GM12878 (cell line): ENCODE measurements at regions of chr6 and their contacts with region 1.

Region 1: GRCh38 chr6:44869321-44869897 is 458.7 kb upstream of the RUNX2 start:
- DNase-seq: peak; percentile 86
- ATAC-seq: peak; percentile 86
- H3K4me3 ChIP-seq: peak overlapping the region; percentile 33
- H3K27ac ChIP-seq: peak overlapping the region; percentile 2
- H3K4me1 ChIP-seq: peaks cover 25% of the 10 kb centered on the region
- H3K27me3 ChIP-seq: no peaks in the 10 kb centered on the region
- CTCF ChIP-seq: no peak
- EP300 ChIP-seq: peak; percentile 46 to 85; a peak in 3 of 4 replicates
- POLR2A ChIP-seq: no peak
- RAD21 ChIP-seq: no peak

Region 2: GRCh38 chr6:44655412-44656342 is 213.7 kb before region 1 on chr6:
- CTCF ChIA-PET with region 1: interaction called, 5 read pairs
- POLR2A ChIA-PET with region 1: no interaction called
- RAD21 ChIA-PET with region 1: interaction called, 8 read pairs
- SMC1A ChIA-PET with region 1: interaction called, 16 read pairs
- in situ Hi-C with region 1: no loop called
- intact Hi-C with region 1: loop called (anchors 5 kb)
- DNase-seq: no peak
- ATAC-seq: peak; percentile 90
- H3K4me3 ChIP-seq: no peak overlapping the region
- H3K27ac ChIP-seq: no peak overlapping the region
- H3K4me1 ChIP-seq: no peaks in the 10 kb centered on the region; the same call in 1 of the 2 replicates
- H3K27me3 ChIP-seq: peaks cover 0 to 2% of the 10 kb centered on the region in 2 experiments; a peak in 1 of 4 replicates
- CTCF ChIP-seq: peak; percentile 90 to 92 (median 90)
- EP300 ChIP-seq: no peak
- POLR2A ChIP-seq: no peak
- RAD21 ChIP-seq: peak; percentile 92

Region 3: DNA sequence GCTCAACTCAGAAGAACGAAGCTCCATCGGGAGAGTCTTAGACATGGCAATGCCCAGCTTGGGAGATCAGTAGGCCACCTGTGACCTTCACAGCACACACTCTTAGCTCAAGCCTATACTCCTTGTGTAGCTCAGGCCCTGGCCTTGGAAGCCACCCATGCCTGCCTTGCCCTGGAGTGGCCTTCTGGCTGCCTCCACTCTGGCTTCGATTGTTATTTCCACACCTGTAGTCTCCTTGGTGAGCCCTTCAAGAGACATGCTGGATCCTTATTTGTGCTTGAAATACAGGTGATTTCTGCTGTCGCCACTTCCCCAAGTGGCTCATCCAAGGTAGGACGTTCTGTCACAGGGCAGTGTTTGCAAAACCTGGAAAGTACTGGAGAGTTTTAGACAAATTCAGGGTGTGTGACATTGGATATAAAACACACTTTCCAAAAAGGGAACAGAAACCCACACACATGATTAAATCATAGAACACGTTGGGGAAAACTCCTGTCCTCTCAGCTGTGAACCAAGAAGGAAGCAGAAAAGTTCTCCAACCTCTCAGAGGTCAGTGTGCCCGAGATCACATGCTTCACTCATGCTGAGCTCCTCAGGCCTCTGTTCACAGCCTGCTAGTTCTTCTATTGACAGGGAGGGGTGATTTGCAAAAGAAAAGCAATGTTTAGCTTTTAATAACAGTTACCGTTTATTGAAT is 90.1 kb before region 1 on chr6:
- CTCF ChIA-PET with region 1: interaction called, 4 read pairs
- POLR2A ChIA-PET with region 1: no interaction called
- RAD21 ChIA-PET with region 1: no interaction called
- SMC1A ChIA-PET with region 1: interaction called, 15 read pairs
- in situ Hi-C with region 1: no loop called
- intact Hi-C with region 1: no loop called
- DNase-seq: peak; percentile 62
- ATAC-seq: peak; percentile 96
- H3K4me3 ChIP-seq: no peak overlapping the region
- H3K27ac ChIP-seq: no peak overlapping the region; the same call in 1 of the 2 replicates
- H3K4me1 ChIP-seq: peaks cover 15% of the 10 kb centered on the region
- H3K27me3 ChIP-seq: no peaks in the 10 kb centered on the region
- CTCF ChIP-seq: no peak
- EP300 ChIP-seq: peak in 1 of 2 experiments; percentile 23; a peak in 1 of 4 replicates
- POLR2A ChIP-seq: no peak
- RAD21 ChIP-seq: no peak

Region 4: DNA sequence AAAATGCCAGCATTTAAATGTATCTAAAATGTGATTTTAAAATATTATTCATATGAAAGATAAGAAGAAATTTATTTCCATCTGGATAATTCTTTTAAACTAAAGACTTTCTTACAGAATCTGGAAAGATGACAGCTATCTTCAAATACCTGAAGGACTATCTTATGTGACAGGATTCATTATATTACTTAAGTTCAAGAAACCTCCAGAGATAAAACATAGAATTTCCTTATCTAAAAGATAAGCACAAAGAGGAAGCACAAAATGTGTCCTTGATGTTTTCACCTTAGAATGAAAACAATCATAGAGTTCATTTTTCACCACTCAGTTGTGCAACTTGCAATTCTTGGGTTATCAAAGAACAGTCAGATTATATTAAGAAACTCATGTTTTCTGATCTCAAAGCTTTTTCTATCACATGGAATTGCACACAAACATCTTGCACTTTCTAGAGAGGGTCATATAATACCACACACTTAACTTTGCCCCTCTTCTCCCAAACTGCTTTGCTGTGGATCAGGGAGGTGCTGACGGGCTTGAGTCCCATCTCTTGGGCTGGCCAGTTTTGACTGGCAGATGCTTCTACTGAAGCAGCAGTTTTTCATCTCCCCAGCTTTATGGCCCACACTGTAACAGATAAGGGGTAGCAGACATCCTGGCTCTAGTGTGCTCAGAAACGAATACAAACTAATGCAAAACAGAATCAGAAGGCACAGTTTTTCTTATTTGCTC is 14.5 kb before region 1 on chr6:
- CTCF ChIA-PET with region 1: interaction called, 3 read pairs
- POLR2A ChIA-PET with region 1: interaction called, 4 read pairs
- RAD21 ChIA-PET with region 1: interaction called, 6 read pairs
- SMC1A ChIA-PET with region 1: interaction called, 10 read pairs
- in situ Hi-C with region 1: no loop called
- intact Hi-C with region 1: no loop called
- DNase-seq: no peak
- ATAC-seq: no peak
- H3K4me3 ChIP-seq: no peak overlapping the region
- H3K27ac ChIP-seq: no peak overlapping the region
- H3K4me1 ChIP-seq: no peaks in the 10 kb centered on the region
- H3K27me3 ChIP-seq: no peaks in the 10 kb centered on the region
- CTCF ChIP-seq: no peak
- EP300 ChIP-seq: no peak
- POLR2A ChIP-seq: no peak
- RAD21 ChIP-seq: no peak

Region 5: DNA sequence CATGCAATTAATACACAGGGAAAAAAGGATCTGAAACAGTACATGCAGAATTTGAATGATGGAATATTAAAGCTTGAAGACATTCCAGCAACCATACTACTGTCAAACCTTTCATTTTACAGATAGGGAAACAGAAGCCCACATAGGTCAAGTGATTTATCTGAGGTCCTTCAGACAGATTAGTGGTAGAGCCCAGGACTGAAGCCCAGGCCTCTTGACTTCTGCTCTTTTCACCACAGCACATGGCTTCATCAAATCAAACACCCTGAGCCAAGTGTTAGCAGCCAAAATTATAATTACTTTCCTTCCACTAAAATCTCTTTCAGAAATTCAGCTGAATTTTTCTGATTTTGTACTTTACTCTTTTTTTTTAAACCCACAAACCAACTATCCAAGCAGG is 23.2 kb after region 1 on chr6:
- CTCF ChIA-PET with region 1: no interaction called
- POLR2A ChIA-PET with region 1: no interaction called
- RAD21 ChIA-PET with region 1: no interaction called
- SMC1A ChIA-PET with region 1: no interaction called
- in situ Hi-C with region 1: no loop called
- intact Hi-C with region 1: no loop called
- DNase-seq: no peak
- ATAC-seq: no peak
- H3K4me3 ChIP-seq: no peak overlapping the region
- H3K27ac ChIP-seq: no peak overlapping the region
- H3K4me1 ChIP-seq: no peaks in the 10 kb centered on the region
- H3K27me3 ChIP-seq: no peaks in the 10 kb centered on the region
- CTCF ChIP-seq: no peak
- EP300 ChIP-seq: no peak
- POLR2A ChIP-seq: no peak
- RAD21 ChIP-seq: no peak

Region 6: DNA sequence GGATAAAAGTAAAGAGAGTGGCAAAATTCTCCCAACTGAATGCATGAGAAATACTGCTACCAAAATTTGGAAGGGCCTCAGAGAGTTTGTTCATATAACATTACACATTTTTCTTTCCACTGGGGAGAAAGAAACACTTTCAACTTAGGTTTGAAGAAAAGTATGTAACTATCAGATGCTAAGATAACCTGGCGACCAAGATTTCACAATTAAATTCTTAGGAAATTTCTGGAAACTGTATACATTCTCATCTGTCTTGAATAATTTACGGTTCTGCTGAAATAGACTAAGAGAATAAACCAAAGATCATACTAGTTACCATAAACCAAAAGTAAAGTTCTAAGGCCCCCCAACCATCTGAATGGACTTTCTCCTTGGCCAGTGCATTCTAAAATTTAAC is 45.7 kb after region 1 on chr6:
- CTCF ChIA-PET with region 1: no interaction called
- POLR2A ChIA-PET with region 1: no interaction called
- RAD21 ChIA-PET with region 1: no interaction called
- SMC1A ChIA-PET with region 1: no interaction called
- in situ Hi-C with region 1: no loop called
- intact Hi-C with region 1: no loop called
- DNase-seq: no peak
- ATAC-seq: no peak
- H3K4me3 ChIP-seq: no peak overlapping the region
- H3K27ac ChIP-seq: no peak overlapping the region
- H3K4me1 ChIP-seq: no peaks in the 10 kb centered on the region
- H3K27me3 ChIP-seq: no peaks in the 10 kb centered on the region
- CTCF ChIP-seq: no peak
- EP300 ChIP-seq: no peak
- POLR2A ChIP-seq: no peak
- RAD21 ChIP-seq: no peak

Region 7: DNA sequence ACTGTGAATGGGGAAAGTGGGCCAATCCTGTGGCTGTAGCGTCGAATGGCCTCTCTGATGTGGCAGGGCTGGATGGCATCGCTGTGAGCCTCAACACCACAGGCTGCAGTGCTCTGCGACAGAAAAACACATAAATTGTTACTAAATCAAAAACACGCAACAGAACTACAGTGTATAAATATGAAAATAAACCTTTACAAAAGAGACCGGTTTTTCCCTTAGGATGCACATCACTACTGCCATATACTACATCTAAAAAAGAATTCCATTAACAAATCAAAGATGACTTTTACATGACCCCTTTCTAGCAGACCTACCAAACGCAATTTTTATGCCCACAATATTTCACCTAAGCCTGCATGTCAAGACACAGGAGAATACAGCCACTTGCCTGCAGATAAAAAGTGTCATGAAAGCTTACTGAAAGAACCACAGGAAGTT is 63.3 kb after region 1 on chr6:
- CTCF ChIA-PET with region 1: no interaction called
- POLR2A ChIA-PET with region 1: interaction called, 4 read pairs
- RAD21 ChIA-PET with region 1: interaction called, 9 read pairs
- SMC1A ChIA-PET with region 1: interaction called, 24 read pairs
- in situ Hi-C with region 1: no loop called
- intact Hi-C with region 1: loop called (anchors 5 kb)
- DNase-seq: no peak
- ATAC-seq: peak; percentile 54
- H3K4me3 ChIP-seq: no peak overlapping the region
- H3K27ac ChIP-seq: peak overlapping the region; percentile 31
- H3K4me1 ChIP-seq: no peaks in the 10 kb centered on the region
- H3K27me3 ChIP-seq: no peaks in the 10 kb centered on the region
- CTCF ChIP-seq: no peak
- EP300 ChIP-seq: no peak
- POLR2A ChIP-seq: no peak
- RAD21 ChIP-seq: no peak

Region 8: DNA sequence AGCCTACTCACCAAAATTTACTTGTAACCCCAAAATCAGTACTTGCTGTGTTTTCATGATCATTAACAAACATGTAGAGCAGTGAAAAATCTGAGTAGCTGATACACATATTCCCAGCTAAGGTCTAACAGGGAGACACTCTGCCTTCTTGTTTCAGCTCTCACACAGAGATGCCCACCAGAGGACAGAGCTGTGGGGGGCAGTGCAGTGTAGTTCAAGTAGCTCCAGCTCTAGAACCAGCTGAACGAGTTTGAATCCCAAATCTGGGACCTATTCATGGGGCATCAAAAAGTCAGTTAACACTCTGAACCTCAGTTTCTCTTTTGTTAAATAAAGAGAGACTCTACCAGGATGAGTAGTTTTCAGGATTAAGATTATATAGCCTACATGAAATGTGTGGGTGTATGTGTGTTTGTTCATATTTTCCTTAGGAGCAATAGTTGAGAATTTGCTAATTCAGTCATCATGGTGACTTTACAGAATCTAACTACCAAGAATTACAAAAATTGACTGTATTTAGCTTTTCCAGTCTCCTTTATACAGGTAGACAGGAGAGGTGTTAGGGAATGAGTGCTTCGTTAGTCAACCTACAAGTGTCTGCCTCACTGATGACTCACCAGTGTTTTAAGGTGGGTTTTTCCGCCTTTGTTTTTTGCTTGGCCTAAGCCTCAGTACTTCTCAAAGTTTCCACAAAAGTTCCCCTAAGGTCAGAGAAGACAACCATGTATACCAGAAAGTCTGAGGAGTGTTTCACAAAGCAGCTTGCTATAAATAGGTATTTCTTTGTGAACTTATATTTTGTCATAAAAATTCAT is 294.8 kb after region 1 on chr6:
- CTCF ChIA-PET with region 1: no interaction called
- POLR2A ChIA-PET with region 1: no interaction called
- RAD21 ChIA-PET with region 1: no interaction called
- SMC1A ChIA-PET with region 1: interaction called, 4 read pairs
- in situ Hi-C with region 1: no loop called
- intact Hi-C with region 1: loop called (anchors 10 kb)
- DNase-seq: peak; percentile 51
- ATAC-seq: peak; percentile 97
- H3K4me3 ChIP-seq: no peak overlapping the region
- H3K27ac ChIP-seq: no peak overlapping the region
- H3K4me1 ChIP-seq: 0 out of 2 replicates have a peak, but pooled peaks cover 4% of the 10 kb centered on the region
- H3K27me3 ChIP-seq: no peaks in the 10 kb centered on the region
- CTCF ChIP-seq: no peak
- EP300 ChIP-seq: no peak
- POLR2A ChIP-seq: no peak
- RAD21 ChIP-seq: no peak